ENCODE measurements at regions of chr1 and their contacts with region 1.

Region 1: GRCh38 chr1:169694304-169695075 is 16.9 kb downstream of the SELL start:
- DNase-seq: peak; percentile 52
- ATAC-seq: peak; percentile 26
- H3K4me3 Mint-ChIP-seq: peak overlapping the region; percentile 39
- H3K27ac Mint-ChIP-seq: peak overlapping the region; percentile 95
- H3K4me1 Mint-ChIP-seq: peaks cover 97% of the 10 kb centered on the region
- H3K27me3 Mint-ChIP-seq: no peaks in the 10 kb centered on the region

Region 2: DNA sequence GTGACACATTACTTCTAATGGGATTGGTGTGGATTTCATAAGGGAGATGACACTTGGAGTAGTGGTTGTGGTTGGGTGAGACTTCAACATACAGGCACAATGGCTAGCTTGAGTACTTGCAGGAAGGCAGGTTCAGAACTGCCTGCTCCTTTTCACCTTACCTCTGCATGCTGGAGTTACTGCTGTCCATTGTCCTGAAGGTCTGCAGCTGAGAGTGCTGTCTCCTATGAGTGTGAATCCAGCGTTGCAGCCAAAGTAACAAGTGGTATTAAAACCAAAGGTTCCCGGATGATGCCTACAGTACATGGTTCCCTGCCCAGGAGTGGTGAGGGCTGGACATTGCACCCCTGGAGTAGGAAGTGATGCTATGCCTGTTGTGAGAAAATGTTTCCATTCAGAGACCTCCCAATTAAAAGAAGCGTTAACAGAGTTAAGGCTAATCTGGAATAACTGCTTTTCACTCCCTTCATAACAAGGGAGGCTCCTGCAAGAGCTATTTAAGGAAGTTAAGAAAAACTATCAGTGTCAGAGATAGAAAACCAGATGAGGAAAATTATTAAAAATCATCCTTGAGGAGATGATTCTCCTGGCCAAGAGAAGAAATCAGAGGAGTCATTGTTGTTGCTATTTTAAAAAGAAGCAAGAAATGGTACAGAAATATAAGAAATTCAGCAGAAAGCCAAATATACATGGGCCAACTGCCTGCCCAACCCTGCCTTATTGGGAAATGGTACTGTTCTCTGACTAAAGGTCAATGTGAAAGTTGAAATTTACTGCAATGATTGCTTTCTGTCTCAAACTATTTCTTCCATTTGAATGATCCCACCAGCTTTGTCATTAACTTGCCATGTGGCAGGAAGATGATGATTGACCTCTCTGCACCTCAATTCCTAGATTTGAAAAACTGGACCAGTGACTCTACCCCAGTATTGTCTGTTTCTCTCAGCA is 98.5 kb before region 1 on chr1:
- CTCF ChIA-PET with region 1: interaction called, 48 read pairs
- POLR2A ChIA-PET with region 1: interaction called, 4 read pairs
- intact Hi-C with region 1: loop called (anchors 1 kb)
- DNase-seq: peak; percentile 57
- ATAC-seq: peak; percentile 54
- H3K4me3 Mint-ChIP-seq: no peak overlapping the region
- H3K27ac Mint-ChIP-seq: no peak overlapping the region
- H3K4me1 Mint-ChIP-seq: peaks cover 62% of the 10 kb centered on the region
- H3K27me3 Mint-ChIP-seq: no peaks in the 10 kb centered on the region

Region 3: DNA sequence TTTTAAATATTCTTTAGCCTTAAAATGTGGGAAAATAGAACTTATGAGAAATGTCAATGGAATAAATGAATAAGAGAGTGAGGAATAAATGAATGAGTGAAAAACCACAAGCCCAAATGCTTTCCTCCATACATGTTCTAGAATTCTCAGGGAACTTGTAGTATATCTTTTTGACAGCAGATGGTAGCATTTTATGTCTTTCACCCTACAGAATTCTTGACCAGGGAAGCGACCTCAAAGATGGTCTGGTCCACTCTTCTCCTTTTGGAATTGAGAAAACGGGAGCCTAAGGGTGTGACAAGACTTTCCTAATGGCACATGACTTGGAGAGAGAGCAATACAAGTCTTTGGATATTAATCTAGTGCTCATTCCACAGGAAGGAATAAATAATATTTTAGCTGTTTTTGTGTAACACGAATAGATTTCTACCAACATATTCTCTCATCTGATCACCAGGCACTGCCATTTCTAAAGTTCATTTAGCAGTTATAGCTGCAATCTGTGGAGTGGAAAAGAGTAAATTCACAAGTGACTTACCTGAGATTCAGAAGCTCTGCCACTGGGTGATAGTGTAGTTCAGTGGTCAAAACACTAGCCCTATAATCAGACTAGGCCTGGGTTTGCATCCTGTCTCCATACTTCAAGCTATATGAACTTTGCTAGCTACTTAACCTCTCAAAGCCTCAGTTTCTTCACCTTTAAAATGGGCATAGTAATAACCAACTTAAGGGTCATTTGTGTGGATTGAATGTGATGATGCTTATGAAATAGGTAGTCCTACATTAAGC is 93.2 kb before region 1 on chr1:
- CTCF ChIA-PET with region 1: interaction called, 48 read pairs
- POLR2A ChIA-PET with region 1: no interaction called
- intact Hi-C with region 1: loop called (anchors 1 kb)
- DNase-seq: no peak
- ATAC-seq: peak; percentile 38
- H3K4me3 Mint-ChIP-seq: no peak overlapping the region
- H3K27ac Mint-ChIP-seq: peak overlapping the region; percentile 72
- H3K4me1 Mint-ChIP-seq: peaks cover 56% of the 10 kb centered on the region
- H3K27me3 Mint-ChIP-seq: no peaks in the 10 kb centered on the region

Region 4: DNA sequence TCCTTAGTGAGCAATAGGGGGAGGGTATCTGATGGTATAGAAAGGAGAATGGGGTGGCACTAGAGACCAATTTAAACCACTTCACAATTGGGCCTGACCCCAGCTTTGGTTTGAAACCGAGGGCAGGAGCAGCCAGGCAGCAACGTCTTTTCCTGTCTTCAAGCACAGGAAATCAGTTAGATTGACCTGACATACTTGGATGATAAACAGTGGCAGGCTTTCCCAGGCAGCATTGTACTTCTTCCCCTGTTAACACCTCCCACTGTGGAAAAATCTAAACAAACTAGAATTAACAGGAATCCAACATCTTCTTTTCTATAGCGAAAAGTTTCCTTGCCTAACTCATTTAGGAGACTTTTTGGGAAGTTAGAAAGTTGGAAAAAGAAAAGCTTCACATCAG is 23.7 kb before region 1 on chr1:
- CTCF ChIA-PET with region 1: interaction called, 5 read pairs
- POLR2A ChIA-PET with region 1: interaction called, 5 read pairs
- intact Hi-C with region 1: loop called in 1 of 2 experiments (anchors 1 kb)
- DNase-seq: no peak
- ATAC-seq: no peak
- H3K4me3 Mint-ChIP-seq: no peak overlapping the region
- H3K27ac Mint-ChIP-seq: no peak overlapping the region
- H3K4me1 Mint-ChIP-seq: peaks cover 57% of the 10 kb centered on the region
- H3K27me3 Mint-ChIP-seq: no peaks in the 10 kb centered on the region

Region 5: DNA sequence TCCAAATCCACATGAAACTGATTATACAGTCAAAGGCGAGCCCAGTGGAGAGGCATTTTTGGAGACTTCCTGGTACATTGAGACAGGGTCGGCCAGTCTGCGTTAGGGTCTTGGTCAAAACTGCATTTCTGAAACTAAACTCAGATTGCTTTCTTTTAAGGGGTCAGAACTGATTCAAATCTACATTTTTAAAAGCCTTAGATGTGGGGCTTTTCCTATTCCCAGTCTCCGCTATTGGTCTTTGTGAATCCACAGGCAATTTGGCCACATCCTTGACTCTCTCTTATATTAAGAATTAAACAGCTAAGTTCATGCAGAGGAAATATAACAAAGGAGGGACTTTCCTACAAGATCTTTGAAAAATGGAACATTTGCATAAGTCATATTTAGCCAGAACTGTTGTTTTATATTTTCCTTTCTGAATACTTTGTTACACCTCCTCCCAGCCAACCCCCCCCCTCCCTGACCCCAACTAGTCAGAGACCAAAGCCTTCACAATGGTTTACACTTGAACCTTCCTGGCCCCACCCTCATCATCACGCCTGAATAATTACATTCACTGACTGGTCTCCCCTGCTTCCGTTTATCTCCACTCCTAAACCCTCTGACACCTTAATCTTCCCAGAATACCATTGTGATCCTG is 14.0 kb before region 1 on chr1:
- CTCF ChIA-PET with region 1: interaction called, 52 read pairs
- POLR2A ChIA-PET with region 1: interaction called, 10 read pairs
- intact Hi-C with region 1: loop called in 1 of 2 experiments (anchors 1 kb)
- DNase-seq: peak; percentile 80
- ATAC-seq: peak; percentile 84
- H3K4me3 Mint-ChIP-seq: peak overlapping the region; percentile 57
- H3K27ac Mint-ChIP-seq: peak overlapping the region; percentile 95
- H3K4me1 Mint-ChIP-seq: peaks cover 64% of the 10 kb centered on the region
- H3K27me3 Mint-ChIP-seq: no peaks in the 10 kb centered on the region

Region 6: DNA sequence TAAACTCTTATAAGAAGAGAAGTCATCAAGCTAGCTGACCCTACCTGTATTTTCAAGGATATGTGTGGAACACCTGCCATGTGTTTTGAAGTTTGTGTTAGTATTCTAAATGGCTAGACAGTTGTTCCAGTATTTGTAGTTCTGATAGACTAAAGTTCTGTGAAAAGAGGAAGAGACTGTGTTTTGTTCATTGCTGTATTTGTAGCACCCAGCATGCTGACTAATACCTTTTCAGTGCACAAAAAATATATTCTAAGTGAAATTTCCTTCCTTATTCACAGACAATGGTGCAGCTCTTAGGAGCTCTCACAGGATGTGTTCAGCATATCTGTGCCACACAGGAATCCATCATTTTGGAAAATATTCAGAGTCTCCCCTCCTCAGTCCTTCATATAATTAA is 108.4 kb after region 1 on chr1:
- CTCF ChIA-PET with region 1: no interaction called
- POLR2A ChIA-PET with region 1: no interaction called
- intact Hi-C with region 1: no loop called
- DNase-seq: no peak
- ATAC-seq: no peak
- H3K4me3 Mint-ChIP-seq: no peak overlapping the region
- H3K27ac Mint-ChIP-seq: no peak overlapping the region
- H3K4me1 Mint-ChIP-seq: peaks cover 4% of the 10 kb centered on the region
- H3K27me3 Mint-ChIP-seq: no peaks in the 10 kb centered on the region

Region 7: GRCh38 chr1:169925505-169926482 is 231.3 kb after region 1 on chr1:
- CTCF ChIA-PET with region 1: no interaction called
- POLR2A ChIA-PET with region 1: no interaction called
- intact Hi-C with region 1: no loop called
- DNase-seq: no peak
- ATAC-seq: peak; percentile 33
- H3K4me3 Mint-ChIP-seq: no peak overlapping the region
- H3K27ac Mint-ChIP-seq: no peak overlapping the region
- H3K4me1 Mint-ChIP-seq: peaks cover 4% of the 10 kb centered on the region
- H3K27me3 Mint-ChIP-seq: no peaks in the 10 kb centered on the region

Region 8: DNA sequence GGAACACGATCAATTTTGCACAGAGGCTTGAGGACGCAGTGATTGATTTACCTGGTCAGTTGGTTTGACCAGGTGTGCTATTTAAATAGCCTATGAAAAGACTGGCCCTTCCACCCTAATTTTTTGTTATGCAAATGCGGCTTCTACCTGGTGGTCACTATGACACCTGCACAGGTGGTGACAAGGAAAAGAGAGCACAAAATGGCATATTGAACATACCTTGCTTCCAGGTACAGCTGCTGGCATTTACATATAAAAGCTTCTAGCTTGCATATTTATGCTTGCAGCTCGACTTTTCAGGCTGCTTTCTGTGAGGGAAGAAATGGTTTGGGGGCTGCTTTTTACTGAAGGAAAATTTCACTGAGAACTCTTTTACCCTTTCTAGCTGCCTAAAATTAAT is 1604.2 kb after region 1 on chr1:
- CTCF ChIA-PET with region 1: no interaction called
- POLR2A ChIA-PET with region 1: no interaction called
- intact Hi-C with region 1: no loop called
- DNase-seq: no peak
- ATAC-seq: no peak
- H3K4me3 Mint-ChIP-seq: no peak overlapping the region
- H3K27ac Mint-ChIP-seq: no peak overlapping the region
- H3K4me1 Mint-ChIP-seq: no peaks in the 10 kb centered on the region
- H3K27me3 Mint-ChIP-seq: peaks cover 13% of the 10 kb centered on the region